Colonic mucosa (tissue), 4 donors: ENCODE measurements at regions of chr4 and their contacts with region 1.

Region 1: GRCh38 chr4:22389240-22389870 is 126.5 kb downstream of the ADGRA3 start:
- DNase-seq: peak; percentile 45
- H3K4me3 ChIP-seq: no peak overlapping the region
- H3K27ac ChIP-seq: no peak overlapping the region
- H3K4me1 ChIP-seq: no peaks in the 10 kb centered on the region
- H3K27me3 ChIP-seq: no peaks in the 10 kb centered on the region
- CTCF ChIP-seq: peak; percentile 69

Region 2: DNA sequence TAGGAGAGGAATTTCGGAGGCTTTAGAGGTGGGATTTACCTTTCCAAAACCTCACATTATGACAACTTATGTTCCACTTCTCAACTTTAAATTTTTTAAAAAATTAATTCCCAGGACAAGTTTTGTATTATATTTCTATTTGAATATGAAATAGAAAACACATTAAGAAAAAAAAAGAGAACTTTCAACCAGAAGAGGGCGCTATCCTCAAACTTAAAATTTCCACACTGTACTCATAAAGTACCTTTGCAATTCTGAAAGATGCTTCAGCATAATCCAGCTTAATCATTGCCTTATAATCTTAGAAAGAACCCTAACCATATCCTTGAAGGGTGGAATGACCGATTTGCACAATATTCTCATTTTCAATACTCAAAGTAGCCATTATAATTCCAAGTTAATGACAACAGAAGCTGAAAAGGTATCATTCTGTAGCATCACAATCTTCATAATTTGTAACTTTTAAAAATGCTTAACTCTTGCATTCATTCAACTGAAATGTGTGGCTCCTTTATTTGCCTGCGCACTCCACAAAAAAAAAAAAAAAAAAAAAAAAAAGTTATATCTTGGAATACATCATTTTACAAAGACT is 598.8 kb before region 1 on chr4:
- intact Hi-C with region 1: loop called (anchors 5 kb)
- DNase-seq: no peak
- H3K4me3 ChIP-seq: no peak overlapping the region
- H3K27ac ChIP-seq: no peak overlapping the region
- H3K4me1 ChIP-seq: no peaks in the 10 kb centered on the region
- H3K27me3 ChIP-seq: no peaks in the 10 kb centered on the region
- CTCF ChIP-seq: peak; percentile 30

Region 3: GRCh38 chr4:22129454-22130029 is 259.8 kb before region 1 on chr4:
- intact Hi-C with region 1: loop called (anchors 5 kb)
- DNase-seq: peak; percentile 25
- H3K4me3 ChIP-seq: no peak overlapping the region
- H3K27ac ChIP-seq: no peak overlapping the region
- H3K4me1 ChIP-seq: no peaks in the 10 kb centered on the region
- H3K27me3 ChIP-seq: no peaks in the 10 kb centered on the region
- CTCF ChIP-seq: peak; percentile 21